GM12878 (cell line): ENCODE measurements at regions of chr12 and their contacts with region 1.

Region 1: GRCh38 chr12:48851883-48852733 is at the start of gene DDX23:
- DNase-seq: peak; percentile 77
- ATAC-seq: peak; percentile 98
- H3K4me3 ChIP-seq: peak within 1 kb of the TSS; percentile 89
- H3K27ac ChIP-seq: peak within 1 kb of the TSS; percentile 90
- H3K4me1 ChIP-seq: peaks cover 10% of the 10 kb centered on the region; the same call in 1 of the 2 replicates
- H3K27me3 ChIP-seq: no peaks in the 10 kb centered on the region
- CTCF ChIP-seq: no peak
- EP300 ChIP-seq: no peak
- POLR2A ChIP-seq: peak; percentile 96
- RAD21 ChIP-seq: no peak
- polyA plus RNA-seq, gene DDX23: 25.8 to 36.3 TPM

Region 2: DNA sequence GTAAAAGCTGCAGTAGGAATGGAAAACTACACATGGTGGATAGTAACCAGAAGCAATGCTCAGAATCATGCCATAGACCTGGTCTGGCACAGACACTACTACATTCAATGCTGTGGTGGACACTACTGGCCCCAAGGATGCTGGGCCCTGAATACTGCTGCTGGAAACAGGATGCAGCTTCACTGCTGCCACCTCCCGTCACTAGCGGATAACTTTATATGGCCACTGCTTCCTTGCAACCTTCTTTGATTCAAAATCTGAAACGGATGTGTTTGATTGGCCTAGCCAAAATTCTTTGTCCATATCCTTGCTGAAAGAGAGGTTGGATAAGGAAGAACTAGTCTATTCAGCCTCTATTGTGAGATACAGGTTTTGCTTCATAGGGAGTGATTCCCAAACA is 93.9 kb before region 1 on chr12:
- CTCF ChIA-PET with region 1: interaction called, 13 read pairs
- POLR2A ChIA-PET with region 1: no interaction called
- RAD21 ChIA-PET with region 1: interaction called, 4 read pairs
- SMC1A ChIA-PET with region 1: no interaction called
- in situ Hi-C with region 1: no loop called
- intact Hi-C with region 1: no loop called
- DNase-seq: no peak
- ATAC-seq: no peak
- H3K4me3 ChIP-seq: no peak overlapping the region
- H3K27ac ChIP-seq: no peak overlapping the region
- H3K4me1 ChIP-seq: no peaks in the 10 kb centered on the region
- H3K27me3 ChIP-seq: no peaks in the 10 kb centered on the region
- CTCF ChIP-seq: no peak
- EP300 ChIP-seq: no peak
- POLR2A ChIP-seq: no peak
- RAD21 ChIP-seq: no peak

Region 3: DNA sequence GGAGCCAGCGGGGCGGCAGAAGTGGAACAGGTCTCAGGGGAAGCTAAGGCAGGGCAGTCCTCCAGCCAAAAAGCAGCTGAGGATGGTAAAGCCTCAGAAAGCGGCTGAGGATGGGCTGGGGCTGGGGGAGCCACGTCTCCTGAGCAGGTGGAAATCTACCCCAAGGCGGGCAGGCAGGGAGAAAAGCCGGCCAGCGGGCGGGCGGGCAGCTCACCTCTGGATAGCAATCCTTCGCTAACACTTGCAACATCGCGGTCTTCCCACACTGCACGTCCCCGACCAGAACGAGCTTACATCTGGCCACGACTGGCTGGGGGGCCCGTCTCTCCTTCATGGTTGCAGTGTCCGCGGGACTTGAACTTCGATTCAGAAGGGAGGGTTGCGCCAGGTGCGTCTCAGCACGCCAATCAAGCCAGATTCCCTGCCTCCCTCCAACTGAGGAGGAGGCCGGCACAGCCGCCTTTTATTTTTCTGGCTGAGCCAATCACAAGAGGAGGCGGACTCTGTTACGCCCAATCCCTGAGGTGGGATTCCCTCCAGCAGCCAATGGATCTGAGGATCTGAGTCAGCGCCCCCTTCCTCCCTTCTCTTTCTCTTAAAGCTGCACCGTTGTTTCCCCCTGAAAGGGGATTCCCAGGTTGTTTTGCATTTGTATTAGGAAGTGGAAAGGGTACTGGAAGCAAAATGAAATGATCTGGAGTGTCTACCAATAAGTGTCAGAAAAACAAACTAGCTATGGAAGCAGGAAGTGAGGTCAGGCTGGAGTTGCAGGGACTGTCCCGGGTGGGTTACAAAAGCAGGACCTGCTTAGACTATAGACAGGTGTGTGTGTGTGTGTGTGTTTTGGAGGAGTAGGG is 13.6 kb after region 1 on chr12 and contains the start of gene RND1:
- CTCF ChIA-PET with region 1: interaction called, 135 read pairs
- POLR2A ChIA-PET with region 1: interaction called, 52 read pairs
- RAD21 ChIA-PET with region 1: interaction called, 42 read pairs
- SMC1A ChIA-PET with region 1: interaction called, 79 read pairs
- in situ Hi-C with region 1: no loop called
- intact Hi-C with region 1: no loop called
- DNase-seq: peak; percentile 89
- ATAC-seq: peak; percentile 95
- H3K4me3 ChIP-seq: peak within 1 kb of the TSS; percentile 79
- H3K27ac ChIP-seq: peak within 1 kb of the TSS; percentile 49
- H3K4me1 ChIP-seq: peaks cover 12% of the 10 kb centered on the region
- H3K27me3 ChIP-seq: no peaks in the 10 kb centered on the region
- CTCF ChIP-seq: 0 out of 6 replicates have a peak, but pooled peaks of 1 of the 3 experiments have one; percentile 5
- EP300 ChIP-seq: no peak
- POLR2A ChIP-seq: peak; percentile 99
- RAD21 ChIP-seq: no peak
- polyA plus RNA-seq, gene RND1: 0.24 to 0.42 TPM

Region 4: DNA sequence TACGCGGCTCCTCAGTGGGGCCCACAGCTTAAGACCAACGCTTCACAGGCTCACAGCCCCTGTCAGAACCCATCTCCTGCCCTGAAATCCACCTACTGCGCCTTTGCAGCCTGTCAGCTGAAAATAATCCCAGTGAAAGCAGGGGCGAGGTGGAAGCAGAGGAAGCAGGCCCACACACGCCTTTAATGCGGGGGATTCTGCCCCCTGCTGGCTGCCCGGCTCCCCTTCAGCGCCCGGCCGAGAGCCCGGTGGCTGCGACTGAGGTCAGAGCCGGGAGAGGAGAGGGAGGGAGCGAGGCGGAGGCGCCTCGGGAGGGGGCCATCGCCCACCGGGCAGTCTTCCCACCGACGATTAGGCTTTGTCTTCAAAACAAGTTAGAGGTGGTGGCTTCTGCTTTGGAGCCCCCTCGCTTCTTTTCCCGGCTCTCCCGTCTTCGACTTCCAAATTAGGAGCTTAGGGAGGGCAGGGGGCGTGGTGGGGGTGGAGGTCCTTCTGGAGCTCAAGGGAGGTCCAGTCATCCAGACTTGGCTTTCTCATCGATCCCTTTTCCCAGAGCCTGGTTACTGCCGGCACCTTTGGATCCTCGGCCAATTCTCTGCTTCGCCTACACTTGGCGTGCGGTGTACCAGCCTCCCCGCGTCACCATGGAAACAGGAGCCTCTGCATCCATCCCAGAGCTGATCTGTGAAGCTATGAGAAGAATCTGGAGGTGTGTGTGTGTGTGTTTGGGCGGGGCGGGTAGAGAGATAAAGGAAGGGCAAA is 38.7 kb after region 1 on chr12:
- CTCF ChIA-PET with region 1: interaction called, 271 read pairs
- POLR2A ChIA-PET with region 1: interaction called, 22 read pairs
- RAD21 ChIA-PET with region 1: interaction called, 167 read pairs
- SMC1A ChIA-PET with region 1: interaction called, 145 read pairs
- in situ Hi-C with region 1: loop called (anchors 5 kb)
- intact Hi-C with region 1: loop called (anchors 1 kb)
- DNase-seq: no peak
- ATAC-seq: peak; percentile 100
- H3K4me3 ChIP-seq: no peak overlapping the region
- H3K27ac ChIP-seq: no peak overlapping the region
- H3K4me1 ChIP-seq: no peaks in the 10 kb centered on the region
- H3K27me3 ChIP-seq: no peaks in the 10 kb centered on the region; a peak in 1 of 4 replicates
- CTCF ChIP-seq: peak; percentile 94 to 95 (median 95)
- EP300 ChIP-seq: no peak
- POLR2A ChIP-seq: no peak
- RAD21 ChIP-seq: peak; percentile 78

Region 5: GRCh38 chr12:48936379-48936979 is 84.4 kb after region 1 on chr12:
- CTCF ChIA-PET with region 1: interaction called, 33 read pairs
- POLR2A ChIA-PET with region 1: interaction called, 6 read pairs
- RAD21 ChIA-PET with region 1: interaction called, 16 read pairs
- SMC1A ChIA-PET with region 1: interaction called, 25 read pairs
- in situ Hi-C with region 1: no loop called
- intact Hi-C with region 1: loop called (anchors 1 kb)
- DNase-seq: no peak
- ATAC-seq: peak; percentile 95
- H3K4me3 ChIP-seq: no peak overlapping the region
- H3K27ac ChIP-seq: no peak overlapping the region
- H3K4me1 ChIP-seq: no peaks in the 10 kb centered on the region
- H3K27me3 ChIP-seq: no peaks in the 10 kb centered on the region
- CTCF ChIP-seq: peak; percentile 83 to 95 (median 90)
- EP300 ChIP-seq: no peak
- POLR2A ChIP-seq: no peak
- RAD21 ChIP-seq: peak; percentile 62

Region 6: DNA sequence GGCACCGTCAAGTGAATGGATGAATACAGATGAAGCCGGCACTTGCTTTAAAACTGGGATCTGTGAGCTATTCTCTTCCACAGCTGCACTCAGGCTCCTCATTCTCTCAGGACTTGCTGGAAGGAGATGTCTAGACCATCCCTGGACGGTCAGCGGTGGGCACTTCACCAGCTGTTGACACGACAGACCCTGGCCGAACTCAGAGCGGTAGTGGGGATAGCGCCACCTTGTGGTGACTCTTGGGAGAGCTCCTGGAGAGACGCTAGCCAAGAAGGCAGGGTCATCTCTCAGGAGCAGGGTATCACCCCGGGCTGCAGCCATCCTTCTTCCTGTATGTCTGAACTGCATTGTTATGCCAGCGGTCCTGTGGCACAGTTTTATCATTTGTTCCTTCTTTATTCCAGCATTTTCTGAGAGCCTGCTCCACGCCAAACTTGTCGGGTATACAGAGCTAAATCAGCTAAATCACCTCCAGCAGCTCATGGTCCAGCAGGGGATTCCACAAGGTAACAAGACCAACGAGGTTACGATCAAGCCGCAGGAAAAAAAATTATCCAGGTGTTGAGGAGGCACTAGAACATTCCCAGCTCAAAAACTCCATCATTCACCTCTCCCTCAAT is 136.0 kb after region 1 on chr12:
- CTCF ChIA-PET with region 1: interaction called, 59 read pairs
- POLR2A ChIA-PET with region 1: interaction called, 8 read pairs
- RAD21 ChIA-PET with region 1: interaction called, 43 read pairs
- SMC1A ChIA-PET with region 1: interaction called, 40 read pairs
- in situ Hi-C with region 1: no loop called
- intact Hi-C with region 1: no loop called
- DNase-seq: no peak
- ATAC-seq: peak; percentile 87
- H3K4me3 ChIP-seq: no peak overlapping the region
- H3K27ac ChIP-seq: no peak overlapping the region
- H3K4me1 ChIP-seq: peaks cover 8% of the 10 kb centered on the region
- H3K27me3 ChIP-seq: peaks cover 0 to 12% of the 10 kb centered on the region in 2 experiments; a peak in 3 of 4 replicates
- CTCF ChIP-seq: peak; percentile 83 to 92 (median 88)
- EP300 ChIP-seq: no peak
- POLR2A ChIP-seq: no peak
- RAD21 ChIP-seq: peak; percentile 55

Region 7: GRCh38 chr12:49079793-49080192 is 227.7 kb after region 1 on chr12:
- CTCF ChIA-PET with region 1: no interaction called
- POLR2A ChIA-PET with region 1: no interaction called
- RAD21 ChIA-PET with region 1: no interaction called
- SMC1A ChIA-PET with region 1: no interaction called
- in situ Hi-C with region 1: no loop called
- intact Hi-C with region 1: no loop called
- DNase-seq: no peak
- ATAC-seq: no peak
- H3K4me3 ChIP-seq: no peak overlapping the region
- H3K27ac ChIP-seq: no peak overlapping the region
- H3K4me1 ChIP-seq: no peaks in the 10 kb centered on the region
- H3K27me3 ChIP-seq: no peaks in the 10 kb centered on the region; a peak in 1 of 4 replicates
- CTCF ChIP-seq: no peak
- EP300 ChIP-seq: no peak
- POLR2A ChIP-seq: no peak
- RAD21 ChIP-seq: no peak

Region 8: DNA sequence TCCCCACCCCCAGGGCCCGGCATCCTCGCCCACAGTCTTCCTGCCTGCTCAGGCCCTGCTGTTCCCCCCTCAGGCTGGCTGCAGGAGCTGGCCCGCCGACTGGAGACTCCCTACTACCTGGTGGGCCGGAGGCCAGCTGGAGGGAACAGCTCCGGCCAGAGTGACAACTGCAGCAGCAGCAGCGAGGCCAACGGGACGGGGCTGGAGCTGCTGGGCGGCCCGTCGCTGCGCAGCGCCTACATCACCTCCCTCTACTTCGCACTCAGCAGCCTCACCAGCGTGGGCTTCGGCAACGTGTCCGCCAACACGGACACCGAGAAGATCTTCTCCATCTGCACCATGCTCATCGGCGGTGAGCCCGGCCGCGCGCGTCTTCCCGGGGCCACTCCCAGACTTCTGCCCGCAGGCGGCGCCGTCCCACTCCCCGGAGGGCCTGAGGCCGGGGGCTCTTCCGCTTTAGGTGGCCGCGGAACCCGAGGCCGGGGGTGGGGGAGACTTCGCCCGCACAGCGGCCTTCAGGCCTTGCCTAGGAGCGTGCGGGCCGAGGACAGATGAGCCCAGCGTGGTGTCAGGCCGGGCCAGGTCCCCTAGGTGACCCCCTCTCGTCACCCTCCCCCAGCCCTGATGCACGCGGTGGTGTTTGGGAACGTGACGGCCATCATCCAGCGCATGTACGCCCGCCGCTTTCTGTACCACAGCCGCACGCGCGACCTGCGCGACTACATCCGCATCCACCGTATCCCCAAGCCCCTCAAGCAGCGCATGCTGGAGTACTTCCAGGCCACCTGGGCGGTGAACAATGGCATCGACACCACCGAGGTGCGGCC is 696.9 kb after region 1 on chr12:
- CTCF ChIA-PET with region 1: no interaction called
- POLR2A ChIA-PET with region 1: no interaction called
- RAD21 ChIA-PET with region 1: no interaction called
- SMC1A ChIA-PET with region 1: no interaction called
- in situ Hi-C with region 1: no loop called
- intact Hi-C with region 1: no loop called
- DNase-seq: no peak
- ATAC-seq: peak; percentile 10; the same call in 2 of the 3 replicates
- H3K4me3 ChIP-seq: no peak overlapping the region; the same call in 1 of the 2 replicates
- H3K27ac ChIP-seq: no peak overlapping the region
- H3K4me1 ChIP-seq: no peaks in the 10 kb centered on the region
- H3K27me3 ChIP-seq: peaks cover 0 to 12% of the 10 kb centered on the region in 2 experiments; a peak in 3 of 4 replicates
- CTCF ChIP-seq: peak in 2 of 3 experiments; percentile 11 to 15; a peak in 1 of 6 replicates
- EP300 ChIP-seq: no peak
- POLR2A ChIP-seq: no peak
- RAD21 ChIP-seq: no peak